Gastrocnemius medialis (tissue), 4 donors: ENCODE measurements at regions of chr7 and their contacts with region 1.

Region 1: DNA sequence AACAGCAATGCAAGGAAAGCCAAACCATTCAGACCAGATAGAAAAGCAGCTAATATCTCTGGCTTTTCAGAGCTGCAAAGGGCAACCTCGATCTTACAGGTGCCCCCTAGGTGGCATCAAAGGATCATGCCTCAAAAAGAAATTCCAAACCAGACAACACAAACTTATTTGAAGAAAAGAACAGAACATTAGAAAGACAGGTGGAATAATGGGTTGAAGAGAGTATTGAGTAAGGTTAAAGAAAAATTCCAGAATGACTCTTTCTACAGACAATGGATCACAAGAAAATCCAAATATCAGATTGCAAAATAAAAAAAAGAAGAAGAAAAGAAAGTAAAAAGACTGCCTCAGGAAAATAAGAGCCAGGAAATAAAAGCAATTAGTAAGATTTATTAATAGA is 213.7 kb downstream of the ELMO1 start:
- DNase-seq: no peak
- ATAC-seq: no peak
- H3K4me3 ChIP-seq: no peak overlapping the region
- H3K27ac ChIP-seq: no peak overlapping the region
- H3K4me1 ChIP-seq: peaks cover 0 to 12% of the 10 kb centered on the region in 2 donors
- H3K27me3 ChIP-seq: no peaks in the 10 kb centered on the region
- CTCF ChIP-seq: peak in 2 of 5 experiments; percentile 31 to 49
- POLR2A ChIP-seq: no peak

Region 2: GRCh38 chr7:37448636-37449361 is 213.9 kb after region 1 on chr7 and contains the start of gene ELMO1:
- in situ Hi-C with region 1: no loop called
- intact Hi-C with region 1: loop called (anchors 10 kb)
- DNase-seq: peak; percentile 45 to 47
- ATAC-seq: peak; percentile 55 to 70
- H3K4me3 ChIP-seq: peak within 1 kb of the TSS; percentile 62 to 78 (median 68)
- H3K27ac ChIP-seq: peak within 1 kb of the TSS; percentile 80 to 84 (median 82)
- H3K4me1 ChIP-seq: no peaks in the 10 kb centered on the region
- H3K27me3 ChIP-seq: peaks cover 8 to 26% (median 11%) of the 10 kb centered on the region in 3 donors
- CTCF ChIP-seq: peak in 4 of 5 experiments; percentile 30 to 48 (median 40)
- POLR2A ChIP-seq: peak; percentile 25 to 55
- total RNA-seq, gene ELMO1: 8.4 to 18.9 (median 14.6) TPM

Region 3: GRCh38 chr7:37495574-37496184 is 260.8 kb after region 1 on chr7:
- in situ Hi-C with region 1: loop called in 1 of 4 experiments (anchors 25 kb)
- intact Hi-C with region 1: no loop called
- DNase-seq: no peak
- ATAC-seq: no peak
- H3K4me3 ChIP-seq: no peak overlapping the region
- H3K27ac ChIP-seq: no peak overlapping the region
- H3K4me1 ChIP-seq: no peaks in the 10 kb centered on the region
- H3K27me3 ChIP-seq: no peaks in the 10 kb centered on the region
- CTCF ChIP-seq: peak in 4 of 5 experiments; percentile 20 to 68 (median 44)
- POLR2A ChIP-seq: no peak

Region 4: GRCh38 chr7:37510043-37510634 is 275.2 kb after region 1 on chr7:
- in situ Hi-C with region 1: no loop called
- intact Hi-C with region 1: loop called (anchors 10 kb)
- DNase-seq: no peak
- ATAC-seq: no peak
- H3K4me3 ChIP-seq: no peak overlapping the region
- H3K27ac ChIP-seq: no peak overlapping the region
- H3K4me1 ChIP-seq: no peaks in the 10 kb centered on the region
- H3K27me3 ChIP-seq: no peaks in the 10 kb centered on the region
- CTCF ChIP-seq: peak in 3 of 5 experiments; percentile 34 to 51 (median 45)
- POLR2A ChIP-seq: no peak

Region 5: DNA sequence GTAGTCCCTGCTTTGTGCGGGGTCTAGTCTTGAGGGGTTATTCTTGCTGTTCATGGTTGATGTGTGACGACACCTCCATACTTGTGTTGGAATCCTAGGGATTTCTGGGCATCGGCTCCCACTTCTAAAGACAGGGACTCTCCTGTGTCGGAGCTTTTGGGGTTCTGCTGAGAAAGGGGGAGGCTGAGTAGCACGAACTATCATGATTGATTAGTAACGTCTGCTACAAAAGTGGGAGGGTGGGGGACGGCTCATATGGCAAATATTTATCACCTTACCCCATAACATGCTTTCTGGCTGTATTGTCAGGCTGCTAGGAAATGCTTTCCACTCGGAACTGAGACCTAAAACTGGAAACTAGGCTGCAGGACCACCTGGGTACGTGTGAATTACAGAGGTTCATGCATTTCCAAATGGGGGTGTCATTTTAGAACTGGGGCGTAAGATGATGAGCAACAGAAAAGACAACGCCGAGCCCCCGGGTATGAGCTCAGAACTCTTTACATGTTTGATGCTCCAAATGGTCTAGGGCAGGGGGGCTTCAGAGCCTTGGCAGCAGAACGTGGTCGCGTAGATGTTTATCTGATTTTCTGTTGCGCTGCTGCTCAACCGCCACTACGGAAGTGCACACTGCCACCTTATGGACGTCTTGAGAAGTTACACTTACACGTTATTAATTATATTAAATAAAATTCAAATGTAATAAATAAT is 598.3 kb after region 1 on chr7:
- in situ Hi-C with region 1: no loop called
- intact Hi-C with region 1: loop called (anchors 10 kb)
- DNase-seq: peak in 1 of 2 donors; percentile 5
- ATAC-seq: no peak
- H3K4me3 ChIP-seq: peak overlapping the region; percentile 23 to 41 (median 37)
- H3K27ac ChIP-seq: no peak overlapping the region
- H3K4me1 ChIP-seq: no peaks in the 10 kb centered on the region
- H3K27me3 ChIP-seq: no peaks in the 10 kb centered on the region
- CTCF ChIP-seq: peak in 4 of 5 experiments; percentile 26 to 68 (median 54)
- POLR2A ChIP-seq: no peak